A549 (cell line): ENCODE measurements at regions of chr10 and their contacts with region 1.

Region 1: GRCh38 chr10:3043512-3044368 is 23.6 kb upstream of the PFKP start:
- DNase-seq: peak; percentile 82 to 89
- ATAC-seq: peak; percentile 78 to 87
- H3K4me3 ChIP-seq: no peak overlapping the region
- H3K27ac ChIP-seq: peak overlapping the region; percentile 70 to 89
- H3K4me1 ChIP-seq: peaks cover 43% of the 10 kb centered on the region
- CTCF ChIP-seq: peak; percentile 91
- EP300 ChIP-seq: no peak
- POLR2A ChIP-seq: no peak
- RAD21 ChIP-seq: peak; percentile 96 to 99

Region 2: DNA sequence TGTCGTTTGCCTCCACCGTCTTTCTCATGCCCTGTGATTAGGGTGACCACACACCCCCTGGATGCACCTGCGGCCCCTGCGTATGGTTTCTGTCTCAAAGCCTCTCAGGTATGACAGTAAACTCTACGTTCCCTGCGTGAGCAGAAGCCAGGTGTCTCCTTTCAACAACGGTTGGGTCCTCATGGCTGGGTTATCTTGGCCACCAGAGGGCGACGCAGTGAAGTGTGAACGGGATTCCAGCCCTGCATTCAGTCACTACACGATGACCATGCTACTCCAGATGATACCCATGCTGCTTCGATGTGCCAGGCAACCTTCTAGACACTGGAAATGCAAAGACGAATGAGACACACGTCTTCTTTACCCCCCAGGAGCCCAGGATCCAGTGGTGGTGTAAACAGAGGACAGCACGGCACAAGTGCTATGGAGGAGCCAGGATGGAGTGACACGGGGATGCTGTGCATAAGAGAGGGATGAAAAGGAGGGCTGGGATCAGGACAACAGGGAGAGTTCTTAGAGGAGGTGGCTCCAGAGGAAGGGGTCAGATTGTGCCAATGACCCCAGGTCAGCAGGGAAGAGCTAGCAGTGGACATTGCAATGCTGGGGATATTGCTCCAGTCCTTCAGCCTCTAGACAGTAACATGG is 204.5 kb before region 1 on chr10:
- CTCF ChIA-PET with region 1: interaction called, 21 read pairs
- POLR2A ChIA-PET with region 1: no interaction called
- DNase-seq: peak; percentile 49 to 56
- ATAC-seq: peak; percentile 58 to 94; a peak in 3 of 6 replicates
- H3K4me3 ChIP-seq: no peak overlapping the region
- H3K27ac ChIP-seq: no peak overlapping the region
- H3K4me1 ChIP-seq: no peaks in the 10 kb centered on the region
- CTCF ChIP-seq: peak; percentile 50
- EP300 ChIP-seq: no peak
- POLR2A ChIP-seq: no peak
- RAD21 ChIP-seq: peak; percentile 45 to 64; a peak in 4 of 5 replicates

Region 3: DNA sequence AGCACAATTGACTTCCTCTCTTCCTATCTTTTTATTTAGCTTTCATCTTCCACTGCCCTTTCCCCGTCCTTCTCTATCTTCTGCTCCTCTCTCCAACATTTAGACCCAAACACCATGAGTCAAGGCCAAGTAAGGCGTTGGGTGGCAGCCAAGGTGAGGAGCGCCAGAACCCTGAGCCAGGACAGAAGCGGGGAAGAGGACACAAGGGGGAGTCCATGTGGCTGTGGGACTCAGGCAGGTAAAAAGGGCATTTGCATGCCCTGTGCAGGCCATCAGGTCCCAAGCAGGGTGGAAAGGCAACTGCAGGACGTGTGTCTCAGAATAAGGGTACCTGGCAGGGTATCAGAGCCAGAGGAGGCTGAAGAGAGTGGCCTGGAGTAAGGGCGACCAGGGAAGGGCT is 168.8 kb before region 1 on chr10:
- CTCF ChIA-PET with region 1: no interaction called
- POLR2A ChIA-PET with region 1: no interaction called
- DNase-seq: no peak
- ATAC-seq: peak in 1 of 2 experiments; percentile 61; a peak in 3 of 6 replicates
- H3K4me3 ChIP-seq: no peak overlapping the region
- H3K27ac ChIP-seq: no peak overlapping the region
- H3K4me1 ChIP-seq: no peaks in the 10 kb centered on the region
- CTCF ChIP-seq: no peak
- EP300 ChIP-seq: no peak
- POLR2A ChIP-seq: no peak
- RAD21 ChIP-seq: no peak

Region 4: DNA sequence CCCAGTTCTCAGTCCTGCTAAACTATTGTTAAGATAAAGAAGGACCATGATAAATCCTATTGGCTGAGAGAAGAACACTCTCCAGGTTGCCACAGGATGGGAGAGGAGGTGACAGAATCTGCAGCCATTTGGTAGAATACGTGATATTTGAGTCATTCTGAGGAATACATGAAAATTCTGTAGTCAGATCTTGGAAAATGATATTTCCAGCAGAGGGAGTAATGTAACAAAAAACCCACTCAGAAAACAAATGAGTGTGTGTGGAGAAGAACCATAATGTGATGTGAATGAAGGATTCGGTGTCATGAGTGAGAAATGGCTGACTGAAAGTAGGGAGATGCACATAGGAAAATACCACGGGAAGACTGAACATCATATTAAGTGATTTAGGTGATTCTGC is 104.9 kb before region 1 on chr10:
- CTCF ChIA-PET with region 1: interaction called, 57 read pairs
- POLR2A ChIA-PET with region 1: no interaction called
- DNase-seq: peak in 1 of 2 experiments; percentile 31
- ATAC-seq: peak; percentile 71 to 73
- H3K4me3 ChIP-seq: no peak overlapping the region
- H3K27ac ChIP-seq: no peak overlapping the region
- H3K4me1 ChIP-seq: peaks cover 3% of the 10 kb centered on the region; the same call in 2 of the 3 replicates
- CTCF ChIP-seq: peak; percentile 51; the same call in 2 of the 3 replicates
- EP300 ChIP-seq: no peak
- POLR2A ChIP-seq: no peak
- RAD21 ChIP-seq: peak; percentile 51 to 61; a peak in 4 of 5 replicates

Region 5: DNA sequence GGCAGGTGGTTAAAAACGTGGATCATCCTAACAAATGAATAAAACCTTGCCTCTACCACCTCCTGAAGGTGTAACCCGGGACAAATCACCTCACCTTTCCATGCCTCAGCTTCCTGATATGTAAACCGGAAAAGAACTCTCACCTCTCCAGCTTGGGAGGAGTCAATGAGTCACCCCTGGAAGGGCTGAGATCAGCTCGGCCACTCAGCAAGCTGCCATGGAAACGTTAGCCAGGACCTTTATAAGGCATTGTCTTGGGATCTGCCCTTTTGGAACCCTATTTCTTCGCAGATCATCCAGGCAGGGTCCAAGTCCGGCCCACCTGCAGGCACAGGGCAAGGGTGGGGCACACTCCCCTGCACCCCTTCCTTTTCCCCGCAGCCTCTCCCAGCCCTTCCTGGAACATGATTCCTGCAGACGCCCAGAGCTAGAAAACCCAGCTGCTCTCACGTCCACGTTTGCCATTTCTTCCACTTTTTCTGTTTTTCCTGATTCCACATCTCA is 58.0 kb before region 1 on chr10:
- CTCF ChIA-PET with region 1: interaction called, 11 read pairs
- POLR2A ChIA-PET with region 1: no interaction called
- DNase-seq: peak; percentile 53 to 56
- ATAC-seq: peak; percentile 72 to 83
- H3K4me3 ChIP-seq: no peak overlapping the region
- H3K27ac ChIP-seq: peak overlapping the region; percentile 25 to 73; a peak in 4 of 6 replicates
- H3K4me1 ChIP-seq: peaks cover 15% of the 10 kb centered on the region
- CTCF ChIP-seq: no peak
- EP300 ChIP-seq: no peak
- POLR2A ChIP-seq: no peak
- RAD21 ChIP-seq: no peak

Region 6: GRCh38 chr10:3025300-3025699 is 18.4 kb before region 1 on chr10:
- CTCF ChIA-PET with region 1: interaction called, 14 read pairs
- POLR2A ChIA-PET with region 1: no interaction called
- DNase-seq: no peak
- ATAC-seq: no peak
- H3K4me3 ChIP-seq: no peak overlapping the region
- H3K27ac ChIP-seq: no peak overlapping the region
- H3K4me1 ChIP-seq: no peaks in the 10 kb centered on the region
- CTCF ChIP-seq: no peak
- EP300 ChIP-seq: no peak
- POLR2A ChIP-seq: no peak
- RAD21 ChIP-seq: no peak

Region 7: GRCh38 chr10:3060481-3060889 is 16.7 kb after region 1 on chr10:
- CTCF ChIA-PET with region 1: interaction called, 14 read pairs
- POLR2A ChIA-PET with region 1: no interaction called
- DNase-seq: no peak
- ATAC-seq: peak; percentile 57 to 65; a peak in 5 of 6 replicates
- H3K4me3 ChIP-seq: no peak overlapping the region
- H3K27ac ChIP-seq: no peak overlapping the region
- H3K4me1 ChIP-seq: peaks cover 11% of the 10 kb centered on the region; the same call in 2 of the 3 replicates
- CTCF ChIP-seq: no peak
- EP300 ChIP-seq: no peak
- POLR2A ChIP-seq: no peak
- RAD21 ChIP-seq: no peak

Region 8: DNA sequence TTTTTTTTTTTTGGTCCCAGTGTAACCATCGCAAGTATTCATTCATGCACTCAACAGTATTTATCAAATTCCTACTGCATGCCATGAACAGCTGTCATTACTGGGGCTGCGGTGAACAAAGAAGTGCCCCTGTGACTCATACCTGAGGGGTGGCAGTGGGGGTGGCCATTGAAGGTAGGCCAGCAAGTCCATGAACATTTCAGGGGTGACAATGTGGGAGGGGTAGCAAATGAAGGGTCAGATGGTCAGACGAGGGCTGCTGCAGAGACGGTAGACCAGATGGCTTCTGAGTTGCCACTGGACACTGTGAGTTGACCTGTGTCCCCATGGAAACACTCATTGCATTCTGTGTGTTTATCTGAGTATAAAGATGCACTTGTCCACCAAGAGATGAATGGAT is 221.3 kb after region 1 on chr10:
- CTCF ChIA-PET with region 1: no interaction called
- POLR2A ChIA-PET with region 1: no interaction called
- DNase-seq: no peak
- ATAC-seq: no peak
- H3K4me3 ChIP-seq: no peak overlapping the region
- H3K27ac ChIP-seq: no peak overlapping the region
- H3K4me1 ChIP-seq: no peaks in the 10 kb centered on the region
- CTCF ChIP-seq: no peak
- EP300 ChIP-seq: no peak
- POLR2A ChIP-seq: no peak
- RAD21 ChIP-seq: no peak